ENCODE measurements at regions of chr20 and their contacts with region 1.

Region 1: GRCh38 chr20:35718972-35719635 is 19.9 kb downstream of the ROMO1 start:
- DNase-seq: no peak
- H3K4me3 Mint-ChIP-seq: no peak overlapping the region
- H3K27ac Mint-ChIP-seq: no peak overlapping the region
- H3K4me1 Mint-ChIP-seq: peaks cover 6% of the 10 kb centered on the region
- H3K27me3 Mint-ChIP-seq: no peaks in the 10 kb centered on the region
- CTCF ChIP-seq: no peak

Region 2: DNA sequence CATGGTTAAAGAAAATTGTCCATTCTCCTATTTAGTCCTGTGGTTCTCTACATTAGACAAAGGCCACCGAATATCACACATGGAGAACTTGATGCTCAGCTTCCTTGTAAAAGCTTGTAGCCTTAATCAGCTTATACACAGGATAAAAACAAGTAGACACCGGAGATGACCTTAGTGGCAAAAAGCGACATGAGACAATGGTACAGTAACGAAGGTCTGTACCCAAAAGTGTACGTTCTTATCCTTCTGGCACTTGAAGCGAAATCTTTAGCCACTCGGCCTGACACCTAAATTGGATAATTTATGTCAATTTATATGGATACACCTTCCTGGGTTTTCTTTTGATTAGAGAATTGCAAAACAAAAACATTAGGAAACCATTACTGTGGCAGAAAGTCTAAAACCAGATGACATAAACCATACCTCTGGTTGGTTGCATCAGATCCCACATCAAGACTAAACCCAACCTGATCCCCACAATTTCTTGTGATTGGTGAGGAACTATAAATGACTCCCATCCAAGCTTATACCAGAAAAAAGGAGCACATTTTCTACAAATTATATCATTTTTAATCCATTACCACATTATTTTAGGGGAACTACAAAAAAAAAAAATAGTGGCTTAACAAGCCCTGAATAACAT is 16.8 kb after region 1 on chr20:
- CTCF ChIA-PET with region 1: interaction called, 5 read pairs
- POLR2A ChIA-PET with region 1: interaction called, 45 read pairs
- intact Hi-C with region 1: no loop called
- DNase-seq: peak; percentile 25
- H3K4me3 Mint-ChIP-seq: peak overlapping the region; percentile 44
- H3K27ac Mint-ChIP-seq: peak overlapping the region; percentile 57
- H3K4me1 Mint-ChIP-seq: peaks cover 29% of the 10 kb centered on the region
- H3K27me3 Mint-ChIP-seq: no peaks in the 10 kb centered on the region
- CTCF ChIP-seq: no peak

Measured in MCF 10A (cell line).